Dorsolateral prefrontal cortex (tissue), 120 donors: ENCODE measurements at regions of chr17 and their contacts with region 1.

Region 1: GRCh38 chr17:28252436-28252835 is 66.6 kb upstream of the TMEM97 start:
- DNase-seq: no peak
- H3K4me3 ChIP-seq: no peak overlapping the region
- H3K27ac ChIP-seq: no peak overlapping the region
- H3K27me3 ChIP-seq: no peaks in the 10 kb centered on the region
- CTCF ChIP-seq: no peak

Region 2: GRCh38 chr17:27805520-27806146 is 446.8 kb before region 1 on chr17:
- intact Hi-C with region 1: loop called (anchors 2 kb)
- DNase-seq: peak; percentile 60 to 90 (median 84)
- H3K4me3 ChIP-seq: peak overlapping the region in 57 of 59 donors; percentile 24 to 64 (median 45)
- H3K27ac ChIP-seq: peak overlapping the region in 28 of 59 donors; percentile 1 to 81 (median 39)
- H3K27me3 ChIP-seq: no peaks in the 10 kb centered on the region
- CTCF ChIP-seq: peak; percentile 65 to 94 (median 88)

Region 3: DNA sequence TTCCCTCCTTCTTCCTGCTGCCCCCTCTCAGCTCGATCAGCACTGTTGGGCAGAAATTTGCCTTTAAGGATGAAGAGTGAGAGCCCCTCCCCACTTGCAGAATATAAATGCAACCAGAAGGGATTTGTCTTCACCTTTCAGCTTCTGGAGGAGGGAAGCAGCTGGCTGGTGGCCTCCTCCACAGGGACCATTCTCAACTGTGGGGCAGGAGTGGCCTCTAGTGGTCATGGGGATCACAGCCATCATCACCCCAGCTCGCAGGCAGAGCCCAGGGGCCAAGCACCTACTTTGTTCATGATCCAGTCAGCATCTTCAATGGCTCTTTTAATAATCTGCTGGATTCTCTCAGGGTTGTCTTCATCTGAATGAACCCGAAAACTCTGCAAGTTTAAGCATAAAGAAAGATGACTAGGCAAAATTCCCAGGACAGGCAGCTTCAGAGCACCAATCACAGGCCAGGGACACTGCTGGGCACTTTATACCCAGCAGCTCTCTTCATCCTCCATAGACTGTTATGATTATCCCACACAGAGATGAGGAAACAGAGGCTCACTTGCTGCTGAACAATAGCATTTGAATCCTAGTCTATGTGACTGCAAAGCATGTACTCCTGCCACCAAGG is 372.3 kb before region 1 on chr17:
- intact Hi-C with region 1: loop called in 1 of 2 experiments (anchors 5 kb)
- DNase-seq: peak; percentile 68 to 86 (median 80)
- H3K4me3 ChIP-seq: no peak overlapping the region
- H3K27ac ChIP-seq: peak overlapping the region in 54 of 59 donors; percentile 24 to 87 (median 70)
- H3K27me3 ChIP-seq: no peaks in the 10 kb centered on the region
- CTCF ChIP-seq: peak; percentile 40 to 97 (median 87)

Region 4: GRCh38 chr17:28306954-28307401 is 54.5 kb after region 1 on chr17:
- intact Hi-C with region 1: no loop called
- DNase-seq: no peak
- H3K4me3 ChIP-seq: peak overlapping the region in 1 of 59 donors; percentile 19
- H3K27ac ChIP-seq: no peak overlapping the region
- H3K27me3 ChIP-seq: peaks cover 0 to 18% (median 3%) of the 10 kb centered on the region in 45 donors
- CTCF ChIP-seq: no peak